ENCODE measurements at regions of chr19 and their contacts with region 1.

Region 1: GRCh38 chr19:3336680-3337523 is 29.5 kb upstream of the NFIC start:
- DNase-seq: peak; percentile 76 to 97
- H3K4me3 ChIP-seq: no peak overlapping the region
- H3K27ac ChIP-seq: peak overlapping the region; percentile 93 to 98
- H3K4me1 ChIP-seq: peaks cover 22 to 50% of the 10 kb centered on the region in 2 donors
- H3K27me3 ChIP-seq: no peaks in the 10 kb centered on the region
- CTCF ChIP-seq: peak in 1 of 3 experiments; percentile 0

Region 2: DNA sequence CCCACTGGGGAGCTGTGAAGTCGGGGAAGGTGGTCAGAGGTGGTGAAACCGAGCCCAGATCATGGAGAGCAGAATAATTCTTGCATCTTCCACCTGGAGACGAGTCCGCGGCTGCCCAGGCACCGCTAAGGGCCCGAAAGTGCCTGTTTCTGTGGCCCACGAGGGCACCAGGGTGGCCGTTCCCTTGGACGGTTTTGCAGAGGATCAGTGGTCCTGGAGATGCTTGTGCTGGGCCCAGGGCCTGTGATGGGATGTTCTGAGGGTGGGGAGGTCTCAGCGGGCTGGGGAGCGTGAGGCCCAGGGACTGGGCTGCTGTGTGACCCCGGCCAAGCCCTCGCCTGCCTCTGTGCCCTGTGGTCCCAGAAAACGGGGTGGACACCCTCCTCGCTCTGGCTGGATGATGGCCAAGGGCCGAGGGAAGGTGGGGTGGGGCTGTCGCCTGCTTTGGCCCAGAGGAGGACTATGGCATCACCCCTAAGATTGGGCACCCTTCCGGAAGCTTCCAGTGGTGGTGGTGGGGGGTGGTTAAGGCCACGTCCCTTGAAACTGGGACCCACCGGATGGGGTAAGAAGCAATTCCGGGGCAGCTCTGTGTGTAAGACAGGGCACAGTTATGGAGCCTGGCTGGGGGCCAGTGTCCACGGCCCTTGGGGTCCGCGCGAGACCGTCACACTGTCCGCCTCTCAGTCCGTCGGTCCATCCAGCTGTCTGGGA is 21.8 kb before region 1 on chr19:
- intact Hi-C with region 1: no loop called
- DNase-seq: no peak
- H3K4me3 ChIP-seq: no peak overlapping the region
- H3K27ac ChIP-seq: no peak overlapping the region
- H3K4me1 ChIP-seq: no peaks in the 10 kb centered on the region
- H3K27me3 ChIP-seq: peaks cover 9% of the 10 kb centered on the region
- CTCF ChIP-seq: no peak

Region 3: DNA sequence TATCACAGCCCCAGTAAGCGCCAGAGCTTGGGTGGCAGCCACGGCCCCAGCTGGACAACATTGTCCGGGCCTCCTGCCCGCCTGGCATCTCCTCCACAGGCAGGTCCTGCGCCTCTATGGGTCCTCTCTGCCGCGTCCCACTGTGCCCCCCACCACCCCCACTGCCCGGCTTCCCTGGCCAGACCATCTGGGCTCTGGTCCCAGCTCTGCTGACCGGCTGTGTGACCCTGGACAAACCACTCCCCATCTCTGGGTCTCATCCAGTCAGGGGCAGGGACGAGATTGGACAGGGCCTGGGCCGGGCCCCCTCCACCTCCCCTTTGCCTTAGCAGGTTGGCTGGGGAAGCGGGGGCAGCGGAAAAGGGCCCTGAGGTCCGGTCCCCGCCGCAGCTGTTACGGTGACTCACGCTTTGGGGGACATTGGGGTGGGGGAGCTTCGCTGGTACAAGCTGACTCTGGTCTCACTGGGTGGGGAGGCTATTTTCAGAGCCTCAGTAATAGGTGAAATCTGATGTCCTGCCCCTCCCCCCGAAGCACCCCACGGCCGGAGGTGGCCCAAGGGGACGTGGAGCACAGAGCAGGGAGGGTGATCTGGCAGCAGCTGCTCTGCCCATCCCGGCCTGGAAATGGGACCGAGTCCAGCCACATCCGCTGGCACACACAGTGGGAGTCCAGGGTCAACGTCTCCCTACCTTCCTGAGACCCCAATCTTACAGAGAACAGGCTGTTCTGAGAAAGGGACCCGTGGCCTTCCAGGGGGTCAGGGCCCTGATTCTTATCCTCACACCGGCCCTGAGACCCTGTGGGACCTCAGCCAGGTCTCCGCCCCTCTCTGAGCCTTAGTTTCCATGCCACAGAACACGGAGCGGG is 38.6 kb after region 1 on chr19:
- intact Hi-C with region 1: loop called (anchors 5 kb)
- DNase-seq: peak; percentile 78 to 96
- H3K4me3 ChIP-seq: peak overlapping the region; percentile 9 to 47
- H3K27ac ChIP-seq: peak overlapping the region; percentile 93 to 96
- H3K4me1 ChIP-seq: peaks cover 20 to 42% of the 10 kb centered on the region in 2 donors
- H3K27me3 ChIP-seq: no peaks in the 10 kb centered on the region
- CTCF ChIP-seq: no peak